MCF 10A (cell line): ENCODE measurements at regions of chr3 and their contacts with region 1.

Region 1: DNA sequence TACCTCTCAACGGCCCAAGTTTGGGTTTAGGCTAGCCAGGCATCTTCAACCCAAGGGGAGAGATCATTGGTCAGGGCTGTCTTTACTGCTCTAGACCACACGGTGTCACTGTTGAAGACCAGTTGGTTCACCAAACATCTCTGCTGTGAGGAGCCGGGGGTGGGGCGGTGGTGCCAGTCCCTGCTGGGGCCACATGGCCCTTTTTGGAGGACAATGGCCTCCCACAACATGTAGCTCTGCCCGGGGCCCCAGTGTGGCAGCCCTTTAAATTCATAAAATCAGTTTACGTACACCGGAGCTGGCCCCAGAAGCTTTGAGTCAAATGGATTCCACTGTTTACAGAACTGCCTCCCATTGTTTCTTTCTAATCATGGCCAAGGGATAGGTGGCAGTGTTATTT is 19.1 kb upstream of the TM4SF18 start:
- DNase-seq: peak; percentile 79
- H3K4me3 Mint-ChIP-seq: no peak overlapping the region
- H3K27ac Mint-ChIP-seq: no peak overlapping the region
- H3K4me1 Mint-ChIP-seq: no peaks in the 10 kb centered on the region
- H3K27me3 Mint-ChIP-seq: no peaks in the 10 kb centered on the region
- CTCF ChIP-seq: peak; percentile 89

Region 2: DNA sequence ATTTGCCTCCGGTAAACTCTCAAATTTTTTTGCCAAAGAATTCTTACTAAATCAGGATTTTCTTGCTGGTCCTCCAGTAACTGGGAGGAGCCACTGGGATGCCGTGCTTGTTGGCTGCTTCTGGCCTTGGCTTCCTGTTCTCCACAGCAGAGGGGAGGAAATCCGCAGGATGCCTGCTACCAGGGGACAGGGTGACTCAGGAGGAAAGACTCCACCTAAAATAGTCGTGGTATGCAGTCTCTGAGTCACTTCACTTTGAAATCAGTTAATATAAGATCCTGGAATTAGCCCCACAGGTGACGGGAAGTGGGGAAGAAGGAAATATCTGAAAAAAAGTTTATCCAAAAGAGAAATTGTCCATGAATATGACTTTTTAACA is 12.6 kb before region 1 on chr3:
- CTCF ChIA-PET with region 1: interaction called, 18 read pairs
- POLR2A ChIA-PET with region 1: no interaction called
- intact Hi-C with region 1: no loop called
- DNase-seq: peak; percentile 91
- H3K4me3 Mint-ChIP-seq: no peak overlapping the region
- H3K27ac Mint-ChIP-seq: peak overlapping the region; percentile 85
- H3K4me1 Mint-ChIP-seq: peaks cover 10% of the 10 kb centered on the region
- H3K27me3 Mint-ChIP-seq: no peaks in the 10 kb centered on the region
- CTCF ChIP-seq: no peak

Region 3: GRCh38 chr3:149366941-149367840 is 14.6 kb after region 1 on chr3:
- CTCF ChIA-PET with region 1: interaction called, 67 read pairs
- POLR2A ChIA-PET with region 1: interaction called, 9 read pairs
- intact Hi-C with region 1: no loop called
- DNase-seq: peak; percentile 90
- H3K4me3 Mint-ChIP-seq: no peak overlapping the region
- H3K27ac Mint-ChIP-seq: peak overlapping the region; percentile 77
- H3K4me1 Mint-ChIP-seq: peaks cover 31% of the 10 kb centered on the region
- H3K27me3 Mint-ChIP-seq: no peaks in the 10 kb centered on the region
- CTCF ChIP-seq: no peak

Region 4: GRCh38 chr3:149393345-149394160 is 41.0 kb after region 1 on chr3:
- CTCF ChIA-PET with region 1: interaction called, 13 read pairs
- POLR2A ChIA-PET with region 1: interaction called, 4 read pairs
- intact Hi-C with region 1: loop called (anchors 1 kb)
- DNase-seq: peak; percentile 84
- H3K4me3 Mint-ChIP-seq: no peak overlapping the region
- H3K27ac Mint-ChIP-seq: no peak overlapping the region
- H3K4me1 Mint-ChIP-seq: peaks cover 26% of the 10 kb centered on the region
- H3K27me3 Mint-ChIP-seq: no peaks in the 10 kb centered on the region
- CTCF ChIP-seq: peak; percentile 79

Region 5: DNA sequence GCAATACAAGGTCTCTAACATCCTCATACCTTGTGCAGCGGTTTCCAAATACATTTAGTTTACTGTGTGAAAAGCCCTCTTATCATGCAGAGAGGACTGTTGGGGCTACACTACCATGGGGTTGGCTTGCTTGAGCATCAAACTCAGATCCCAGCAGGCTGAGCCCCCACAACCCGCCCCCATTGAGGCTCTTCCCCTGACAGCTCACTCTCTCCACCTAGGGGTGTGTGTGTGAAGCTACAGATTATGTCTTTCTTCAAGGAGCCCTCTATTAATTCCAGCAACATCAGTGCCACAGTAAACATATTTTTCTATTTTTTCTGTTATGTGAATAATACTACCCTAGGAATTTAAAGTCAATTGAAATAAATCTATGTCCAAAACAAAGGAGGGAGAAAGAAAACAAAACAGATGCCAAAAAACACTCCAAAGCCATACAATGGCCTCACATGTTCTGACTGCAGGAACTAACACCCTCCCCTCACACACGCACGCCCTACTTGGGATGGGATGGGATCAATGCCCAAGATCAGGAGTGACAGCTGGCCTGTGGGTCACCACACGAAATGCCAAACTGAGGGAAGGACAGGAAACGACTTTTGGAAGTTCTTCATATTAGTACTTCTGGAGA is 136.6 kb after region 1 on chr3:
- CTCF ChIA-PET with region 1: interaction called, 13 read pairs
- POLR2A ChIA-PET with region 1: no interaction called
- intact Hi-C with region 1: no loop called
- DNase-seq: peak; percentile 25
- H3K4me3 Mint-ChIP-seq: no peak overlapping the region
- H3K27ac Mint-ChIP-seq: no peak overlapping the region
- H3K4me1 Mint-ChIP-seq: no peaks in the 10 kb centered on the region
- H3K27me3 Mint-ChIP-seq: peaks cover 15% of the 10 kb centered on the region
- CTCF ChIP-seq: peak; percentile 45

Region 6: GRCh38 chr3:149618151-149619123 is 265.9 kb after region 1 on chr3:
- CTCF ChIA-PET with region 1: no interaction called
- POLR2A ChIA-PET with region 1: no interaction called
- intact Hi-C with region 1: no loop called
- DNase-seq: peak; percentile 86
- H3K4me3 Mint-ChIP-seq: no peak overlapping the region
- H3K27ac Mint-ChIP-seq: peak overlapping the region; percentile 17
- H3K4me1 Mint-ChIP-seq: peaks cover 34% of the 10 kb centered on the region
- H3K27me3 Mint-ChIP-seq: no peaks in the 10 kb centered on the region
- CTCF ChIP-seq: no peak